Common myeloid progenitor, CD34-positive (primary cell): ENCODE measurements at regions of chr1 and their contacts with region 1.

Region 1: GRCh38 chr1:15028102-15028501 is 125.4 kb upstream of the TMEM51 start:
- DNase-seq: no peak
- H3K4me3 ChIP-seq: no peak overlapping the region
- H3K27ac ChIP-seq: no peak overlapping the region
- H3K4me1 ChIP-seq: no peaks in the 10 kb centered on the region
- H3K27me3 ChIP-seq: peaks cover 0 to 3% (median 0%) of the 10 kb centered on the region in 5 experiments

Region 2: DNA sequence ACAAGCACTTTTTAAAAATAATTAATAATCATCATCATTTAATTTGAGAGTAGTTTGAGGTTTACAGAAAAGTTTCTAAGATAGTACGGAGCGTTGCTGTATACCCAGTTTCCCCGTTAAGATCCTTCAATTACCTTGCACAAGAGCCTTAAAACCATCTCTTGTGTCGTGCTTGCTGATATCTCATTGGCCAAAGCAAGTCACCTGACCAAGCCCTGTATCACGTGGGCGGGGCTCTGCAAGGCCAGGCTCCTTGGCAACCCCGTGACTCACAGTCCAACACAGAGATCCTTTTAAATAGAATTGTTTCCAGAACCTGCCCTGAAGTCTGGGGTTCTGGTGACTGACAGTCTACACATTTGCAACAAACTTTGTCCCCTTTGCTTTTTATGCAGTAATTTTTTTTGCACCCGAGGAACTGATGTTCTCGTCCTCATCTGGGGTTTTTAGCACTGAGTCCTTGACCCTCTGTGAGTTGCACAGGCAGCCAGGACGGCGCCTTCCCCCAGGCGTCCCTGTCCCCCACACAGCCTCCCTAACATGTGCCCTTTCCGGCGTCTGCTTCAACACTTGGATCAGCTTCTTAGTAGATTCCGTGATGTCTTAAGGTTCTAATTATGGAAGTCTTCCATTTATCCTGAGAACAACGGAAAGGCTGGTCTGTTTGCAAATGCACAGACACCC is 57.8 kb before region 1 on chr1:
- CTCF ChIA-PET with region 1: no interaction called
- POLR2A ChIA-PET with region 1: no interaction called
- DNase-seq: peak; percentile 39 to 68 (median 60)
- H3K4me3 ChIP-seq: no peak overlapping the region
- H3K27ac ChIP-seq: no peak overlapping the region
- H3K4me1 ChIP-seq: peaks cover 0 to 4% (median 0%) of the 10 kb centered on the region in 4 experiments
- H3K27me3 ChIP-seq: no peaks in the 10 kb centered on the region

Region 3: GRCh38 chr1:15008783-15009729 is 19.0 kb before region 1 on chr1:
- CTCF ChIA-PET with region 1: interaction called, 12 read pairs
- POLR2A ChIA-PET with region 1: no interaction called
- DNase-seq: peak in 2 of 3 donors; percentile 15 to 22
- H3K4me3 ChIP-seq: no peak overlapping the region
- H3K27ac ChIP-seq: no peak overlapping the region
- H3K4me1 ChIP-seq: peaks cover 0 to 31% (median 3%) of the 10 kb centered on the region in 4 experiments
- H3K27me3 ChIP-seq: peaks cover 0 to 30% (median 0%) of the 10 kb centered on the region in 5 experiments

Region 4: DNA sequence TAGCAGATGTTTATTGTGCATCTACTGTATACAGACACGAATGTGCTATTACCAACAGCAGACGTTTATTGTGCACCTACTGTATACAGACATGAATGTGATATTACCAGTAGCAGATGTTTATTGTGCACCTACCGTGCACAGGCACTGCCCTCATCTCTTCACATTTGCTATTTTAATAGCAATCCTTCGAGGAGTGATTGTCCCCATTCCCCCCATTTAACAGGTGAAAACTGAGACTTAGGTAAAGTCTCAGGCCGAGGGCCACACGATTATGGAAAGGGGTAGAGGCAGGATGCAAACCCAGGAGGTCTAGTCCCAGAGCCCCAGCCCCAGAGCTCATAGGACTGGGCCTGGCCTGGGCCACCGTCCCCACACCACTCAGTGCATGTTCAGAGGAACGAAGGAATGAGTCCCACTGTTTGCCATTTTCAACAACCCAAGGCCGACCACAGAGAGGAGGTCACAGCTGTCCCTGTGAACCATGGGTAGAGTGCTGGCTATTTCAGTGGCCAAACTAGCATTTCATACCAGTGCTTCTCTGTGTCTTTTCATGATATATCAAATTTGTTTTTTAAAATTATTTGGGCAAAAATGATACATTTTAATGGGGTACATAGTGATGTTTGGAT is 11.0 kb after region 1 on chr1:
- CTCF ChIA-PET with region 1: interaction called, 17 read pairs
- POLR2A ChIA-PET with region 1: no interaction called
- DNase-seq: peak in 1 of 3 donors; percentile 24
- H3K4me3 ChIP-seq: no peak overlapping the region
- H3K27ac ChIP-seq: no peak overlapping the region
- H3K4me1 ChIP-seq: no peaks in the 10 kb centered on the region
- H3K27me3 ChIP-seq: no peaks in the 10 kb centered on the region